Activated T-helper 2 cell treated with anti-CD3 and anti-CD28 coated beads, Interferon-gamma antibody, Interleukin-2, Interleukin-4, amounts not matched to agents 10 μg/mL and 5 μg/mL and 100 μg/mL, durations not matched to agents 14 hours and 24 hours and 36 hours (primary cell): ENCODE measurements at regions of chr12 and their contacts with region 1.

Region 1: GRCh38 chr12:6607751-6608591 is 792 bp upstream of the CHD4 start:
- DNase-seq: peak; percentile 69
- H3K4me3 Mint-ChIP-seq: no peak overlapping the region
- H3K27ac Mint-ChIP-seq: no peak overlapping the region
- H3K4me1 Mint-ChIP-seq: peaks cover 45% of the 10 kb centered on the region
- H3K27me3 Mint-ChIP-seq: no peaks in the 10 kb centered on the region

Region 2: DNA sequence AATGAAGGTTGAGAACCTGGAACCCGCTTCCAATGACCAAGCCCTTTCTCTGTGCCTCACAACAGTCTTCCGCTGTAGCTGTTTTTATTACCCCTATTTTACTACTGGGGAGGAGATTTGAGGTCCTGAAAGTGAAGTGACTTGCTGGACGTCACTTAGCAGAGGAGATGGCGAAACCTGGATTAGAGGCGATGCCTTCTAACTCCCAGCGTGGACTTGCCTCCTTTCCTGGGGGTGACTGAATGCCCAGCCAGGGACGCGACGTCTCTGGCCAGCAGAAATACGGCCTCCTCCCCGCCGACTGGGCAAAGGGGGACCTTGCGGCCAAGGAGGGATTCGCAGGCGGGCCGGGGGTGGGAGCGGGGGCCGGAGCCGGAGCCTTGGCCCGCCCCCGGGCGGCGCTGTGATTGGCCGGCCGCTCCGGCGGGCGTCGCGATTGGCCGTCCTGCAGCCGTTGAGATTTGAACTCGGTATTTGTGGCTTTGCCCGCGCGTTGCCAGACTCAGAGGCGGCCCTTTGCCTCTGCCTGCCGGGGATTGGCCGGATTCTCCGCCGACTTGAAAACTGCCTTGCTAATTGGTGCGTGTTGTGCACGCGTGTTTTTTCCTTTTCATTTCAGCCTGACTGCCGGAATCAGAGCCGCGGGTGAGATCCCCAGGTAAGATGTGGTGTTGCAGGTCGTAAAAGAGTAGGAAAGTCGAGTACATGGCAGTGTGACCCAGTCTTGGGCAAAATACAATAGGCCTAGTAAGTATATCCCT is 114.3 kb before region 1 on chr12 and contains the start of gene NCAPD2:
- intact Hi-C with region 1: loop called (anchors 1 kb)
- DNase-seq: peak; percentile 97
- H3K4me3 Mint-ChIP-seq: peak within 1 kb of the TSS; percentile 93
- H3K27ac Mint-ChIP-seq: peak within 1 kb of the TSS; percentile 97
- H3K4me1 Mint-ChIP-seq: peaks cover 29% of the 10 kb centered on the region
- H3K27me3 Mint-ChIP-seq: no peaks in the 10 kb centered on the region
- total RNA-seq, gene NCAPD2: 114 and 120 TPM in 2 replicates

Region 3: GRCh38 chr12:6574576-6575295 is 33.2 kb before region 1 on chr12:
- intact Hi-C with region 1: loop called (anchors 2 kb)
- DNase-seq: no peak
- H3K4me3 Mint-ChIP-seq: no peak overlapping the region
- H3K27ac Mint-ChIP-seq: peak overlapping the region; percentile 52
- H3K4me1 Mint-ChIP-seq: peaks cover 22% of the 10 kb centered on the region
- H3K27me3 Mint-ChIP-seq: no peaks in the 10 kb centered on the region

Region 4: GRCh38 chr12:6723607-6724396 is 115.8 kb after region 1 on chr12 and contains the start of gene COPS7A:
- intact Hi-C with region 1: loop called (anchors 1 kb)
- DNase-seq: peak; percentile 98
- H3K4me3 Mint-ChIP-seq: peak within 1 kb of the TSS; percentile 99
- H3K27ac Mint-ChIP-seq: peak within 1 kb of the TSS; percentile 98
- H3K4me1 Mint-ChIP-seq: peaks cover 17% of the 10 kb centered on the region
- H3K27me3 Mint-ChIP-seq: no peaks in the 10 kb centered on the region
- total RNA-seq, gene COPS7A: 33.0 and 35.6 TPM in 2 replicates

Region 5: GRCh38 chr12:6825398-6826124 is 217.6 kb after region 1 on chr12:
- intact Hi-C with region 1: loop called (anchors 5 kb)
- DNase-seq: peak; percentile 71
- H3K4me3 Mint-ChIP-seq: no peak overlapping the region
- H3K27ac Mint-ChIP-seq: no peak overlapping the region
- H3K4me1 Mint-ChIP-seq: peaks cover 32% of the 10 kb centered on the region
- H3K27me3 Mint-ChIP-seq: peaks cover 43% of the 10 kb centered on the region

Region 6: DNA sequence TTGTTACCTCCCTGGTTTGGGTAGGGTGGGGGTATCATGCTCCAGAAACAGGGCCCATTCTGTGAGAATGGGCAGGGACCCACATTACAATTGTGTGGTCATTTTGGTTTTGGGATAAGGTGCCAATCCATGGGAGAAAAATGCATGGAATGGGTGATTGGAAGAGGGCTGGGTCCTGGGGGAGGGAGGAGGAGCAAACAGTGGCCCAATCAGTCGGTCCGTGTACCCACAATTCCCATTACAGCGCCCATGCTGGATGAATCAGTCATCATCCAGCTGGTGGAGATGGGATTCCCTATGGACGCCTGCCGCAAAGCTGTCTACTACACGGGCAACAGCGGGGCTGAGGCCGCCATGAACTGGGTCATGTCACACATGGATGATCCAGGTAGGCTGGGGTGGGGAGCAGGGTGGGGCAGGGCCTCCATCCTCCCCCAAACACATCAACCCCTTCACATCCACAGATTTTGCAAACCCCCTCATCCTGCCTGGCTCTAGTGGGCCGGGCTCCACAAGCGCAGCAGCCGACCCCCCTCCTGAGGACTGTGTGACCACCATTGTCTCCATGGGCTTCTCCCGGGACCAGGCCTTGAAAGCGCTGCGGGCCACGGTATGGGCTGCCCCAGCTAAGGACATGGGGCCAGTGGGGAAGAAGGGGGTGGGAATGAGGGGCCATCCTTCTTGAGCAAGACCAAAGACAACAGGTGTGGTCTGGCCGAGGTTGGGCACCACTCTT is 255.8 kb after region 1 on chr12:
- intact Hi-C with region 1: no loop called
- DNase-seq: no peak
- H3K4me3 Mint-ChIP-seq: no peak overlapping the region
- H3K27ac Mint-ChIP-seq: no peak overlapping the region
- H3K4me1 Mint-ChIP-seq: peaks cover 10% of the 10 kb centered on the region
- H3K27me3 Mint-ChIP-seq: no peaks in the 10 kb centered on the region